ENCODE measurements at regions of chr22 and their contacts with region 1.

Region 1: GRCh38 chr22:38569972-38570778 is at the start of gene DMC1:
- DNase-seq: peak; percentile 77 to 96 (median 89)
- ATAC-seq: peak; percentile 99
- H3K4me3 ChIP-seq: peak within 1 kb of the TSS; percentile 88
- H3K4me3 Mint-ChIP-seq: peak within 1 kb of the TSS; percentile 89 to 94 (median 92)
- H3K27ac ChIP-seq: peak within 1 kb of the TSS; percentile 87
- H3K27ac Mint-ChIP-seq: peak within 1 kb of the TSS; percentile 75 to 94 (median 91)
- H3K4me1 ChIP-seq: peaks cover 7 to 8% of the 10 kb centered on the region in 2 donors
- H3K4me1 Mint-ChIP-seq: peaks cover 7 to 21% (median 17%) of the 10 kb centered on the region in 7 donors
- H3K27me3 ChIP-seq: no peaks in the 10 kb centered on the region
- H3K27me3 Mint-ChIP-seq: peaks cover 0 to 7% (median 0%) of the 10 kb centered on the region in 5 donors
- total RNA-seq, gene DMC1: 0.32 to 7.4 (median 0.65) TPM in 4 of 5 experiments, not detected in the other

Region 2: GRCh38 chr22:37953437-37954179 is 616.6 kb before region 1 on chr22 and contains the starts of genes C22orf23 and POLR2F:
- CTCF ChIA-PET with region 1: no interaction called
- POLR2A ChIA-PET with region 1: no interaction called
- intact Hi-C with region 1: loop called in 1 of 2 experiments (anchors 1 kb)
- DNase-seq: peak; percentile 92 to 96 (median 94)
- ATAC-seq: peak; percentile 97
- H3K4me3 ChIP-seq: peak within 1 kb of the TSS; percentile 96
- H3K4me3 Mint-ChIP-seq: peak within 1 kb of the TSS; percentile 93 to 100 (median 99)
- H3K27ac ChIP-seq: peak within 1 kb of the TSS; percentile 75
- H3K27ac Mint-ChIP-seq: peak within 1 kb of the TSS; percentile 93 to 99 (median 95)
- H3K4me1 ChIP-seq: peaks cover 13 to 18% of the 10 kb centered on the region in 2 donors
- H3K4me1 Mint-ChIP-seq: peaks cover 27 to 54% (median 51%) of the 10 kb centered on the region in 7 donors
- H3K27me3 ChIP-seq: no peaks in the 10 kb centered on the region
- H3K27me3 Mint-ChIP-seq: peaks cover 4 to 20% (median 14%) of the 10 kb centered on the region in 5 donors
- total RNA-seq, gene C22orf23: 0.31 TPM in 1 of 5 experiments, not detected in the others
- total RNA-seq, gene POLR2F: 25.9 to 67.8 (median 43.9) TPM

Region 3: DNA sequence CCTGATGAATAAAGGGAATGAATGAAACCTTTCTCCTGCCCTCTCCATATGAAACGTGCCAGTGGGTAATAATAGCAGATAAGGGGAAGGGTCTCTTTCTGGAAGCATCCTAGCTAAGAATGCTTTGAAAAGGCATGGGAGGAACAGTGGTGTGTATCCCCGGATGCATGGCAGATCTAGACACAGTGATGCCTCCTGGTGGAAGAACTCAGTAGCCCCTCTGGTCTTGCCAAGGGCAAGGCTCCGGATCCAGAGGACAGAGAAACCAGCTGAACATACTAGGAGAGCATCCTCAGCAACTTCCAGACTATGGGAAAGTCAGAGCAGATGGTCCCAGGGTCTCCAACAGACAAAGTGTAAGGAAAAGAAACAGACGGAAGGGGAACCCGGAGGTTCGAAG is 466.1 kb before region 1 on chr22:
- CTCF ChIA-PET with region 1: no interaction called
- POLR2A ChIA-PET with region 1: no interaction called
- intact Hi-C with region 1: loop called (anchors 5 to 10 kb)
- DNase-seq: no peak
- ATAC-seq: no peak
- H3K4me3 ChIP-seq: no peak overlapping the region
- H3K4me3 Mint-ChIP-seq: no peak overlapping the region
- H3K27ac ChIP-seq: no peak overlapping the region
- H3K27ac Mint-ChIP-seq: no peak overlapping the region
- H3K4me1 ChIP-seq: no peaks in the 10 kb centered on the region
- H3K4me1 Mint-ChIP-seq: peaks cover 0 to 19% (median 9%) of the 10 kb centered on the region in 7 donors
- H3K27me3 ChIP-seq: no peaks in the 10 kb centered on the region
- H3K27me3 Mint-ChIP-seq: no peaks in the 10 kb centered on the region

Region 4: DNA sequence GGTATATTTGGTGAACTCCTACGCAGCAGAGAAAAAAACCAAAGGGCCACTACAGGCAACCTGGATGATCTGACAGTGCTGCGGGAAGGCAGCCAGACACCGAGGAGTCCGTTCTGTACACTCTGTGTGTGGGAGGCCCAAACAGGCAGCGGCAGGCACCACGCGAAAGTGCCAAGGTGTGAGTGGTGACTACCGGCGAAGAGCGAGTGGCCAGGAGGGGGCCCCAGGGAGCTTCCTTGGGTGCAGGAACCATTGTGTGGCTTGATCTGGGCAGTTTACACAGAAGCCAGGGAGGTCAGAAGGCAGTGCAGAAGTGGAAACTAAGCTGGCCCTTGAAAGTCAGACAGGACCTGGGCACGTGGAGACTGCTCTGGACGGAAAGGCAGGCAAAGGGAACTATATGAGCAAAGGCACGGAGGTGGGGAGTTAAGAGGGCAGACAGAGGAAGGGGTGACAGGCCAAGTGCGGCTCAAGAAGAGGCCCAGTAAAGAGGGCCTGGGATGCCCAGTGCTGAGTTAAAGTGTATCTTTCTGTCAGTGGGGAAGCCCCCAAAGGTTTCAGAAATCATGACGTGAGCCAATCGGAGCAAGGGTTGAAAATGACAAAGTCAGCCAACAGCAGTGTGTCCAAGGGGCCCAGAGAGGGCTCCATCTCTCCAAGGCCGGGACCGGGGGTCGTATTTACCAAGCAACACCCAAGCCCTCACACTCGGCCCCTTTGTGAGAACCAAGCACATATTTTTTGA is 308.0 kb before region 1 on chr22:
- CTCF ChIA-PET with region 1: no interaction called
- POLR2A ChIA-PET with region 1: no interaction called
- intact Hi-C with region 1: loop called in 1 of 2 experiments (anchors 10 kb)
- DNase-seq: peak in 5 of 9 donors; percentile 18 to 39 (median 20)
- ATAC-seq: peak; percentile 47
- H3K4me3 ChIP-seq: no peak overlapping the region
- H3K4me3 Mint-ChIP-seq: peak overlapping the region in 1 of 10 donors; percentile 53
- H3K27ac ChIP-seq: no peak overlapping the region
- H3K27ac Mint-ChIP-seq: peak overlapping the region in 2 of 9 donors; percentile 15 to 63
- H3K4me1 ChIP-seq: peaks cover 10 to 28% of the 10 kb centered on the region in 2 donors
- H3K4me1 Mint-ChIP-seq: peaks cover 27 to 75% (median 65%) of the 10 kb centered on the region in 7 donors
- H3K27me3 ChIP-seq: no peaks in the 10 kb centered on the region
- H3K27me3 Mint-ChIP-seq: no peaks in the 10 kb centered on the region

Region 5: GRCh38 chr22:38317122-38317994 is 252.8 kb before region 1 on chr22 and contains the start of gene CSNK1E:
- CTCF ChIA-PET with region 1: no interaction called
- POLR2A ChIA-PET with region 1: no interaction called
- intact Hi-C with region 1: loop called in 1 of 2 experiments (anchors 1 kb)
- DNase-seq: peak; percentile 67 to 85 (median 74)
- ATAC-seq: peak; percentile 79
- H3K4me3 ChIP-seq: peak within 1 kb of the TSS; percentile 62
- H3K4me3 Mint-ChIP-seq: peak within 1 kb of the TSS; percentile 84 to 92 (median 89)
- H3K27ac ChIP-seq: peak within 1 kb of the TSS; percentile 91
- H3K27ac Mint-ChIP-seq: peak within 1 kb of the TSS; percentile 94 to 97 (median 95)
- H3K4me1 ChIP-seq: peaks cover 28 to 39% of the 10 kb centered on the region in 2 donors
- H3K4me1 Mint-ChIP-seq: peaks cover 31 to 49% (median 42%) of the 10 kb centered on the region in 7 donors
- H3K27me3 ChIP-seq: no peaks in the 10 kb centered on the region
- H3K27me3 Mint-ChIP-seq: no peaks in the 10 kb centered on the region
- total RNA-seq, gene CSNK1E: 71.6 to 143 (median 91.9) TPM

Region 6: GRCh38 chr22:38412435-38413084 is 157.6 kb before region 1 on chr22:
- CTCF ChIA-PET with region 1: no interaction called
- POLR2A ChIA-PET with region 1: no interaction called
- intact Hi-C with region 1: loop called in 1 of 2 experiments (anchors 1 kb)
- DNase-seq: peak in 8 of 9 donors; percentile 22 to 66 (median 38)
- ATAC-seq: peak; percentile 74
- H3K4me3 ChIP-seq: no peak overlapping the region
- H3K4me3 Mint-ChIP-seq: peak overlapping the region in 3 of 10 donors; percentile 12 to 61 (median 51)
- H3K27ac ChIP-seq: no peak overlapping the region
- H3K27ac Mint-ChIP-seq: no peak overlapping the region
- H3K4me1 ChIP-seq: no peaks in the 10 kb centered on the region
- H3K4me1 Mint-ChIP-seq: peaks cover 0 to 5% (median 0%) of the 10 kb centered on the region in 7 donors
- H3K27me3 ChIP-seq: no peaks in the 10 kb centered on the region
- H3K27me3 Mint-ChIP-seq: peaks cover 0 to 3% (median 0%) of the 10 kb centered on the region in 5 donors

Region 7: GRCh38 chr22:38656256-38657044 is 86.3 kb after region 1 on chr22 and contains the starts of genes CBY1 and FAM227A:
- CTCF ChIA-PET with region 1: no interaction called
- POLR2A ChIA-PET with region 1: no interaction called
- intact Hi-C with region 1: loop called (anchors 1 to 5 kb)
- DNase-seq: peak; percentile 79 to 94 (median 85)
- ATAC-seq: peak; percentile 92
- H3K4me3 ChIP-seq: peak within 1 kb of the TSS; percentile 98
- H3K4me3 Mint-ChIP-seq: peak within 1 kb of the TSS; percentile 94 to 96 (median 96)
- H3K27ac ChIP-seq: peak within 1 kb of the TSS; percentile 93
- H3K27ac Mint-ChIP-seq: peak within 1 kb of the TSS; percentile 92 to 99 (median 98)
- H3K4me1 ChIP-seq: peaks cover 4 to 9% of the 10 kb centered on the region in 2 donors
- H3K4me1 Mint-ChIP-seq: peaks cover 4 to 23% (median 18%) of the 10 kb centered on the region in 7 donors
- H3K27me3 ChIP-seq: no peaks in the 10 kb centered on the region
- H3K27me3 Mint-ChIP-seq: no peaks in the 10 kb centered on the region
- total RNA-seq, gene CBY1: 12.2 to 39.9 (median 15.2) TPM
- total RNA-seq, gene FAM227A: 0.05 to 1.0 (median 0.30) TPM in 4 of 5 experiments, not detected in the other

Region 8: DNA sequence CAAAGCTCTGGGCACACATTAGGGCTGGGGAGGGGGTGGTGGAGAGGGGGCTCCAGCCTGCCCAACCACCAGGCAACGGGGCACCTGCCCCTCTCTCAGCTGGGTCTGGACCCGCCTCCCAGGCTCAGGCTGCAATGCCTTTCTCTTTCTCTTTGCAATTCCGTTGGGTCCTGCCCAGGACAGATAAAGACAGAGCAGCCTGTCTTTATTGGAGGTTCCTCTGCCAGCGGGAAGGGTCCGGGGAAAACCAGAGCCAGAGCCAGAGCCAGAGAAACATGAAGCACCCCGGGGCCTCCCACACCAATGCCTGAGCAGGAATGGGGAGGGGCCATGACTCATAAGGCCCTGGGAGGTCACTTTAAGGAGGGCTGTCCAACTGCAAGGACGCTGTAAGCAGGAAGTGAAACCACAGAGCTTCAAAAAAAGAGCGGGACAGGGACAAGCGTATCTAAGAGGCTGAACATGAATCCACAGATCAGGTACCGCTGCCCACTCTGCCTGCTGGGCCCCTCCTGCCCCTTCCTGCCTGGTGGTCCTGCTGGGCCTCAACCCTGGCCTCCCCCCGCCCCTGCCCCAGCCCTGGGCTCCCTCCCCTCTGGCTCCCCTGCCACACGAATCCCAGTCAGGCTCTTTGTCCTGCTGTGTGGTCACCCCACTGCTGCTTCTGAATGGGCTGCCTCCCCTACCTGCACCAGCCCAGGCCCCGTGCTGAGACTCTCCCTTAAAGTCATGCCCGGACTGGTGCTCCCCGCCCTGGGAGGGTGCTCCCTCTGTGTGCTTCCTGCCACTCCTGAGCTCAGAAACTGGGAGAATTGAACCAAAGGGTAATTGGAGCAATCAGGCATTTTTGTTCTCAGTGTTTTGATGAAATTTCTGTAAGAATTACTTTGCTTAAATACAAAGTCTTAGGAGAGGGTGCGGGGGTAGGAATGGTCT is 412.1 kb after region 1 on chr22 and contains the start of gene APOBEC3B:
- CTCF ChIA-PET with region 1: no interaction called
- POLR2A ChIA-PET with region 1: no interaction called
- intact Hi-C with region 1: no loop called
- DNase-seq: peak in 7 of 9 donors; percentile 15 to 79 (median 28)
- ATAC-seq: peak; percentile 90
- H3K4me3 ChIP-seq: peak within 1 kb of the TSS; percentile 46
- H3K4me3 Mint-ChIP-seq: peak within 1 kb of the TSS; percentile 75 to 90 (median 86)
- H3K27ac ChIP-seq: no peak within 1 kb of the TSS
- H3K27ac Mint-ChIP-seq: peak within 1 kb of the TSS in 5 of 9 donors; percentile 12 to 98 (median 74)
- H3K4me1 ChIP-seq: peaks cover 0 to 8% of the 10 kb centered on the region in 2 donors
- H3K4me1 Mint-ChIP-seq: peaks cover 10 to 47% (median 12%) of the 10 kb centered on the region in 7 donors
- H3K27me3 ChIP-seq: no peaks in the 10 kb centered on the region
- H3K27me3 Mint-ChIP-seq: peaks cover 0 to 3% (median 0%) of the 10 kb centered on the region in 5 donors
- total RNA-seq, gene APOBEC3B: 0.30 to 16.0 (median 7.1) TPM in 4 of 5 experiments, not detected in the other

Region 9: DNA sequence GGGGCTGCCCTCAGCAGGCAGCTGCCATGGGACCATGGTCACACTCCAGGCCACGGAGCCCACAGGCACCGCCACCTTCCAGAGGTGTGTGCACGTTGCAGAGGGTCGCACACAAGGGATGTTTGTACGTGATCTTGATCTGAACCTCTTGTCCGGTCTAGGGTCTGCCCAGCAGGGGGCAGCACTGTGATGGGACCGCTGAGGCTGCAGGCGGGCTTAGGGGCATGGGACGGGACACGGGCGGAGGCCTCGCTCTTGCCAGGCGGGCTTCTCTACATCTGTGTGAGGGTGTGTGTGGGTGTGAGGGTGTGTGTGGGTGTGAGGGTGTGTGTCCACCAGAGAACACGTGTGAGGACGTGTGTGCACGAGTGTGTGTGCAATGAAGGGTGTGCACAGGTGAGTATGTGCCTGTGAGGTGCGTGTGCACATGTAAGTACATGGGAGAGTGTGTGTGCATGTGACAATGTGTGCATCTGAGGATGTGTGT is 1052.7 kb after region 1 on chr22:
- CTCF ChIA-PET with region 1: no interaction called
- POLR2A ChIA-PET with region 1: no interaction called
- intact Hi-C with region 1: no loop called
- DNase-seq: peak; percentile 60 to 73 (median 68)
- ATAC-seq: peak; percentile 84
- H3K4me3 ChIP-seq: no peak overlapping the region
- H3K4me3 Mint-ChIP-seq: no peak overlapping the region
- H3K27ac ChIP-seq: no peak overlapping the region
- H3K27ac Mint-ChIP-seq: no peak overlapping the region
- H3K4me1 ChIP-seq: peaks cover 0 to 5% of the 10 kb centered on the region in 2 donors
- H3K4me1 Mint-ChIP-seq: peaks cover 6 to 18% (median 11%) of the 10 kb centered on the region in 7 donors
- H3K27me3 ChIP-seq: no peaks in the 10 kb centered on the region
- H3K27me3 Mint-ChIP-seq: peaks cover 0 to 11% (median 2%) of the 10 kb centered on the region in 5 donors